CD8-positive, alpha-beta T cell (primary cell): ENCODE measurements at regions of chr2 and their contacts with region 1.

Region 1: GRCh38 chr2:119354860-119355259 is 11.8 kb downstream of the C2orf76 start:
- DNase-seq: no peak
- ATAC-seq: no peak
- H3K4me3 ChIP-seq: no peak overlapping the region
- H3K4me3 Mint-ChIP-seq: no peak overlapping the region
- H3K27ac ChIP-seq: no peak overlapping the region
- H3K27ac Mint-ChIP-seq: no peak overlapping the region
- H3K4me1 ChIP-seq: no peaks in the 10 kb centered on the region
- H3K4me1 Mint-ChIP-seq: peaks cover 6% of the 10 kb centered on the region
- H3K27me3 ChIP-seq: no peaks in the 10 kb centered on the region
- H3K27me3 Mint-ChIP-seq: no peaks in the 10 kb centered on the region
- CTCF ChIP-seq: no peak

Region 2: GRCh38 chr2:119324685-119325270 is 30.1 kb before region 1 on chr2:
- CTCF ChIA-PET with region 1: no interaction called
- POLR2A ChIA-PET with region 1: interaction called, 3 read pairs
- intact Hi-C with region 1: loop called in 1 of 2 experiments (anchors 1 kb)
- DNase-seq: no peak
- ATAC-seq: no peak
- H3K4me3 ChIP-seq: no peak overlapping the region
- H3K4me3 Mint-ChIP-seq: no peak overlapping the region
- H3K27ac ChIP-seq: no peak overlapping the region
- H3K27ac Mint-ChIP-seq: no peak overlapping the region
- H3K4me1 ChIP-seq: no peaks in the 10 kb centered on the region
- H3K4me1 Mint-ChIP-seq: no peaks in the 10 kb centered on the region
- H3K27me3 ChIP-seq: no peaks in the 10 kb centered on the region
- H3K27me3 Mint-ChIP-seq: no peaks in the 10 kb centered on the region
- CTCF ChIP-seq: no peak